ENCODE measurements at regions of chr13 and their contacts with region 1.

Region 1: DNA sequence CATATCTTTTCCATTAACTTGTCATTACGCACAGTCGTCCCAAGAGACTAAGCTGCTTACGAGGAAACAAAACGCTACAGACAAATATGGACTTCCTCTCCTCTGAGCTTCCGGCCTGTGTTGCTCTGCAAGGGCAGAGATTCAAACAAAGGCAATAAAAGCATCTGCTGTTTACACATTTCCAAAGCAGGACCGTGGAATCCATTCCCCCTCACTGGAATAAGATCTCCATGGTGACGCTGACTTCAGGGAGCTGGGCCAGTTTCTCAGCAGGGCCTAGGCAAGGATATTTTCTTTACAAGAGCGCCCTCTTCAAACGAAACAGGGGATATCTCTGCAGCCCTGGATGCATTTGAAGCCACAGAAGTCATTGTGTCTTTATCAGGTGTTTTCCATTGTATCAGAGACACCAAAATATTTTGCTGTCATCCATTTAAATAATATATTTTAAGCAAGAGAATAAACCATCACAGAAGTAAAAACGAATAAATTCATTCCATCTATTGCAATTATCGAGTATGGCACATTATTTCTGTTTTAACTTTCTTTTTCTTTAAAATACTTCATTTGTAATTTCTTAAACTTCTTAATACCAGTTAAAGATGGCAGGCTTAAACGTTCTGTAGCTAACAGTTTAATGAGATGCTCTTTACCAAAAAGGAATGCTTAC is 177.5 kb downstream of the DCLK1 start:
- DNase-seq: peak; percentile 79
- H3K4me3 ChIP-seq: no peak overlapping the region
- H3K27ac ChIP-seq: no peak overlapping the region
- H3K4me1 ChIP-seq: no peaks in the 10 kb centered on the region
- H3K27me3 ChIP-seq: no peaks in the 10 kb centered on the region
- CTCF ChIP-seq: peak; percentile 54 to 57
- POLR2A ChIP-seq: no peak

Region 2: GRCh38 chr13:35940734-35941133 is 12.9 kb before region 1 on chr13:
- CTCF ChIA-PET with region 1: interaction called, 10 read pairs
- POLR2A ChIA-PET with region 1: no interaction called
- dilution Hi-C with region 1: no loop called
- intact Hi-C with region 1: no loop called
- DNase-seq: no peak
- H3K4me3 ChIP-seq: no peak overlapping the region
- H3K27ac ChIP-seq: no peak overlapping the region
- H3K4me1 ChIP-seq: no peaks in the 10 kb centered on the region
- H3K27me3 ChIP-seq: peaks cover 0 to 3% of the 10 kb centered on the region in 2 experiments
- CTCF ChIP-seq: no peak
- POLR2A ChIP-seq: no peak